IMR-90 (cell line): ENCODE measurements at regions of chr13 and their contacts with region 1.

Region 1: DNA sequence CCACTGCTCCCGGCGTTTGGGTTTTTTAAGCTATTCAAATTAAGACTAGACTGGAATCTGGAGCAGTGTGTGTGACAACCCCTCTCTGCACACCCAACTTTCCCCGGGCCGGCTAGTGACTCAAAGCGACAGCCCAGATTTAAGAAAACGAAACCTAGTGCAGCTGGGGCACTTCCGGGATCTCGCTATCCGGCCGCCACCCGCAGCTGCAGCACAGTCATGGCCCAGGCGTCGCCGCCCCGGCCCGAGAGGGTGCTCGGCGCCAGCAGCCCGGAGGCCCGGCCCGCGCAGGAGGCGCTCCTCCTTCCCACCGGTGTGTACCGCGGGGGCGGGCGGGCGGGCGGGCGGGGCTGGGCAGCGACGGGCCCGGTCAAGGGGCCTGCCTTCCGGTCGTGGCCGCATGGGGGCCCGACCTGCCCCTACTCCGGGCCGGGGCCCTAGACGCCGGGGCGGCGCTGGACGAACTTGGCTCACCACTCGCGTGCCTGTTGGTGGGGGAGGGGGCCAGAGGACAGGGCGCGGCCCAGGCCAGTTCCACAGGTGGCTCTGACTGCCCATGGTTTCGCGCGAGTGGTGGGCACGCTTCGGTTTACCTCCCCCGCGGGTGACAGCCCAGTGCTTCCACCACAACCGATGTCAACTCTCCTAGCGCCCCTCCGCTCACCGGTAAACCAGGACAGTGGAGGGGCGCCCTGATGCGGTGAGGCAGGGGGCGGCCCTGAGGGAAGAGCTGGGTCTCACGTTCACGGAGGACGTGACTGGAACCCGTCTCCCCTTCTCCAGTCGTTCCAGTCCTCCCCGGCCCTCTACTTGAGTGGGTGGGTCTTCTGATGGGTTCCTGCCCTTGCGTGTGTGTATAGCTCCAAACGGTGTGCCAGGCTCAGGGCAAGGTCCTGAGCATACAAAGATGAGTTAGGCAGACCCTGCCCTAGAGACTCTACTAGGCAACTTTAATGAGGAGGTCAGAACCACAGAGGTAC is at the start of gene PHF11:
- DNase-seq: peak; percentile 76
- ATAC-seq: peak; percentile 73
- H3K4me3 ChIP-seq: peak within 1 kb of the TSS; percentile 56
- H3K27ac ChIP-seq: peak within 1 kb of the TSS; percentile 81
- H3K4me1 ChIP-seq: peaks cover 12% of the 10 kb centered on the region
- H3K27me3 ChIP-seq: no peaks in the 10 kb centered on the region
- CTCF ChIP-seq: no peak
- POLR2A ChIP-seq: peak; percentile 48; the same call in 1 of the 2 replicates
- RAD21 ChIP-seq: no peak
- total RNA-seq, gene PHF11: 3.9 and 6.7 TPM in 2 replicates

Region 2: DNA sequence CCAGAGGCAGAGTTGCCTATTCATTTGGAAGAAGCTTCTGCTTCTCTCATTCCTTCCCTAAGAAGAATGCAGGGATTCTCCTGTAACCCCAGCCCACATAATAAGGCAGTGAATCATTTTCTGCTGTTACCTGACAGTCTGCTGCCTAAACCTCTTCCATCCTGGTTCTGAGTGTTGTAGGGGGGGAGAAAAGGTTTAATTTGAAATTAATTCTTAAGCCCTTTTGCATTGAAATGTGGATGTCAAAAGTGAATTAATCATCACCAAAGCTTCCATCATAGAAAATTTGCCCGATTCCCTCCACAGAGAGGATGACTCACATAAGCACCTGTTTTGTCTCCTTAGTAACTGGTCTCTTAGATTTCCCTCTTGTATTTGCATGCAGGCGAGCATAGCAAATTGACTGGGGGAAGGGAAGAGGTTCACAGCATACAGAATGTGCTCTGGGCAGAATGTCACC is 667.1 kb before region 1 on chr13:
- CTCF ChIA-PET with region 1: no interaction called
- POLR2A ChIA-PET with region 1: no interaction called
- dilution Hi-C with region 1: no loop called
- in situ Hi-C with region 1: no loop called
- intact Hi-C with region 1: no loop called
- DNase-seq: peak; percentile 32
- ATAC-seq: no peak
- H3K4me3 ChIP-seq: no peak overlapping the region
- H3K27ac ChIP-seq: no peak overlapping the region
- H3K4me1 ChIP-seq: peaks cover 2% of the 10 kb centered on the region; the same call in 1 of the 2 replicates
- H3K27me3 ChIP-seq: no peaks in the 10 kb centered on the region
- CTCF ChIP-seq: no peak
- POLR2A ChIP-seq: no peak
- RAD21 ChIP-seq: no peak

Region 3: GRCh38 chr13:49858183-49858856 is 362.2 kb after region 1 on chr13:
- CTCF ChIA-PET with region 1: no interaction called
- POLR2A ChIA-PET with region 1: no interaction called
- dilution Hi-C with region 1: no loop called
- in situ Hi-C with region 1: no loop called
- intact Hi-C with region 1: no loop called
- DNase-seq: peak; percentile 99
- ATAC-seq: peak; percentile 92
- H3K4me3 ChIP-seq: no peak overlapping the region
- H3K27ac ChIP-seq: peak overlapping the region; percentile 92
- H3K4me1 ChIP-seq: peaks cover 6% of the 10 kb centered on the region
- H3K27me3 ChIP-seq: no peaks in the 10 kb centered on the region
- CTCF ChIP-seq: no peak
- POLR2A ChIP-seq: no peak
- RAD21 ChIP-seq: no peak; the same call in 1 of the 2 replicates

Region 4: GRCh38 chr13:50248516-50249143 is 752.6 kb after region 1 on chr13:
- CTCF ChIA-PET with region 1: no interaction called
- POLR2A ChIA-PET with region 1: no interaction called
- dilution Hi-C with region 1: no loop called
- in situ Hi-C with region 1: no loop called
- intact Hi-C with region 1: no loop called
- DNase-seq: no peak
- ATAC-seq: no peak
- H3K4me3 ChIP-seq: no peak overlapping the region
- H3K27ac ChIP-seq: no peak overlapping the region
- H3K4me1 ChIP-seq: peaks cover 8% of the 10 kb centered on the region
- H3K27me3 ChIP-seq: peaks cover 43% of the 10 kb centered on the region
- CTCF ChIP-seq: no peak
- POLR2A ChIP-seq: no peak
- RAD21 ChIP-seq: no peak

Region 5: GRCh38 chr13:50357586-50358118 is 861.6 kb after region 1 on chr13:
- CTCF ChIA-PET with region 1: no interaction called
- POLR2A ChIA-PET with region 1: interaction called, 11 read pairs
- dilution Hi-C with region 1: no loop called
- in situ Hi-C with region 1: no loop called
- intact Hi-C with region 1: no loop called
- DNase-seq: peak; percentile 93
- ATAC-seq: peak; percentile 79
- H3K4me3 ChIP-seq: no peak overlapping the region
- H3K27ac ChIP-seq: no peak overlapping the region
- H3K4me1 ChIP-seq: peaks cover 16% of the 10 kb centered on the region
- H3K27me3 ChIP-seq: no peaks in the 10 kb centered on the region; the same call in 1 of the 2 replicates
- CTCF ChIP-seq: no peak
- POLR2A ChIP-seq: no peak
- RAD21 ChIP-seq: no peak